ENCODE measurements at regions of chr7 and their contacts with region 1.

Region 1: DNA sequence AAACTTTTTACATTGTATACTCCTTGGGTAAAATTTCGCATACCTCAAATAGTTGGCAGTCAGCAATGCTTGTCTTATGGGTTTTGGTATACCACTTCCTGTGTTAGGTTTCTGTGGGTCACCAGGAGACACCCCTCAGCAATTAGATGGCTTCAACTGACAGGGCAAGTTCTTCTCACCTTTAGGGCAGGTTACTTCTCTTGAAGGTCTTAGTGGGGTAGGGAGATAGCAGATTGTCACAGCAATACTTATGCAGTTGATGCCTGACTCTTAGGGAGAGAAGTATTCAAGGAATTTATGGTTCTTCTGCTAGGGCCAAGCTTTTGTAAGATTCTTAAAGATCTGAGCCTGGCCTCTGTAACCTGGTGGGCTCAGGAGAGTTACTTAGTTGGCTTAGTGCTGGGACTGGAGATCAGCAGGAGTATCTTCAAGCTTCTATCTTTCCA is 42.9 kb downstream of the MKLN1 start:
- DNase-seq: peak; percentile 30
- ATAC-seq: peak; percentile 64
- H3K4me3 Mint-ChIP-seq: no peak overlapping the region
- H3K27ac Mint-ChIP-seq: no peak overlapping the region
- H3K4me1 Mint-ChIP-seq: peaks cover 70% of the 10 kb centered on the region
- H3K27me3 Mint-ChIP-seq: no peaks in the 10 kb centered on the region

Region 2: GRCh38 chr7:131188367-131189339 is 181.9 kb before region 1 on chr7:
- CTCF ChIA-PET with region 1: no interaction called
- POLR2A ChIA-PET with region 1: no interaction called
- intact Hi-C with region 1: loop called in 1 of 2 experiments (anchors 1 kb)
- DNase-seq: peak; percentile 65
- ATAC-seq: peak; percentile 84
- H3K4me3 Mint-ChIP-seq: peak overlapping the region; percentile 58
- H3K27ac Mint-ChIP-seq: peak overlapping the region; percentile 96
- H3K4me1 Mint-ChIP-seq: peaks cover 55% of the 10 kb centered on the region
- H3K27me3 Mint-ChIP-seq: no peaks in the 10 kb centered on the region

Region 3: DNA sequence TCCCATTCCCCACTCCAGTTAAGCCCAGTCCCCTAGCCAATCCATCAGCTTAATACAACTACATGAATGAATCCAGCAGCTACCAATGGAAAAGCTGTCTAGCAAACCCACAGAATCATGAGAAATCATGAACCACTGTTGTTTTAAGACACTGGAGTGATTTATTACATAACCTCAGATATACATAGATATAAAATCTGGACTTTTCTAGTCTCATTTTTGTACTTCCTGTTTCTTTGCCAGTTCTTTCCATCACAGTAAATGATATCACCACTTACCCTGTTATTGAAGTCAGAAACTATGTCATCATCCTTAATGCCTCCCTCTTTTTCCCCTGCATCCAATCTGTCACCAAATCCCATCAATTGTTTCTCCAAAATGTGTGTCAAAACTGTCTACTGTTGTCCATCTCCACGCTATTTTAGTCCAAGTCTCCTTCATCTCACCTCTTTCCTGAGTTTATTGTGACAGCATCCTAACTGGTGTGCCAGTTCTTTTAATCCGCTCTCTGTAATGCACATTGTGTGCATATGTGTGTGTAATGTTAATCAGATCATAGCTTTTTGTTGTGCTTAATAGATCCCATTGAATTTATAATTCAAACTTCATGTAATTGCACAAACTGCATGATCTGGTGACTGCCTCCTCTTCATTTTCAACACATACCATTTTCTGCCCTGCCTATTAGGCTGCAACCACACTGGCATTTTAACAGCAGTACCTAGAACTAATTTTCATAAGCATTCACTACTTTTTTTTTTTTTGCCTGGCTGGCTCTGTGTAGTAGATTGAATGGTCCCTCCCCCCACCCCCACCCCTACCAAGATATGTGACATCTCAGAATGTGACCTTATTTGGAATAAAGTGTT is 13.1 kb after region 1 on chr7:
- CTCF ChIA-PET with region 1: no interaction called
- POLR2A ChIA-PET with region 1: no interaction called
- intact Hi-C with region 1: loop called (anchors 1 kb)
- DNase-seq: no peak
- ATAC-seq: peak; percentile 53
- H3K4me3 Mint-ChIP-seq: no peak overlapping the region
- H3K27ac Mint-ChIP-seq: peak overlapping the region; percentile 12
- H3K4me1 Mint-ChIP-seq: peaks cover 40% of the 10 kb centered on the region
- H3K27me3 Mint-ChIP-seq: no peaks in the 10 kb centered on the region

Measured in activated CD4-positive, alpha-beta T cell treated with anti-CD3 and anti-CD28 coated beads for 36 hours (primary cell).